Prostate gland (tissue), 2 donors: ENCODE measurements at regions of chr5 and their contacts with region 1.

Region 1: DNA sequence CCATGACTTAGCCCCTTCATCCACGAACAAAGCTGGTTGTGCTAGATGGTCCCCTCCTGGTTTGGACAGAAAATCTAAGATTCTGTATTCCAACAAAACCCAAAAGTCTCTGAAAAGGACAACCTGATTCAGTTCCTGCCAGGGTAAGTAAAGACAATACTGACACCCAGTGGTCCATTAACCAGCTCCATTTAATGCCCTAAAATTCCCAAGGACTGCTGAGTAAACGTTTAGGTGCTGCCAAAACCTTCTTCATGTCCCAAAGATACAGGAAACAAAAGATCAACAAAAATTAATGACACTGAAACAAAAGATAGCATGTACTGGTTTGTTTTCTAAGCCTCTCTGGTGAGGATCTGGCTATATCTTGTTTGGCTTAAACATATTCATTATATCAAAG is 25.3 kb upstream of the PPP1R2B start:
- DNase-seq: peak; percentile 30
- H3K4me3 ChIP-seq: no peak overlapping the region
- H3K27ac ChIP-seq: no peak overlapping the region
- H3K4me1 ChIP-seq: no peaks in the 10 kb centered on the region
- H3K27me3 ChIP-seq: no peaks in the 10 kb centered on the region
- CTCF ChIP-seq: peak in 3 of 4 experiments; percentile 35 to 57 (median 43)
- POLR2A ChIP-seq: no peak

Region 2: DNA sequence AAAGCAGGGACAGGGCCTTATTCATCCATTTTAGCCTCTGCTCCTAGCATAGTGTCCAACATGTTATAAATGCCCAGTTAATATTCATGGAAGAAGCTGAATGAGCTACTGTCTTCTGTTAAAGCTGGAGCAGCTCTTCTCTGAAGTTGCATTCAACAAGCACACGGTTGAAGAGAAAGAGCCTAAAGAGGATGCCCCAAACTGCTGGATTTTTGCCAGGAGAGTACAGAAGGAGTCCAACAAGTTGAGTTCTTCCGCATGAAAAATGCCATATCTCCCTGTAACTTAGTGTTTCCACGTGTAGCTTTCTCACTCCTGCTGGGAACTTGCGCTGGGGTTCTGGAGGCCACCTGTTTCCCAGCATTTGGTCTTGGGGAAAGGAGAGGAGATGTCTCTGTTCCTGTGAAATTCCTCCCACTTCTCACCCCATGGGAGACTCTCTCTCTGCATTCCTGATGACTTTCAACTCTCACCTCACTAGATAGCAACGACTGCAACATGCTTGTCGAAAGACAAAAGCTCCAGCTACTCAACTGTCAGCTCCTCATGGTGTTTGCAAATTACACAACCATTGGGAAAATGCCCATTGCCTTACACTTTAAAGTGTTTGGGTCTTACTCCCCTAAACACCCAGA is 1688.5 kb before region 1 on chr5:
- intact Hi-C with region 1: loop called (anchors 10 kb)
- DNase-seq: no peak
- H3K4me3 ChIP-seq: no peak overlapping the region
- H3K27ac ChIP-seq: no peak overlapping the region
- H3K4me1 ChIP-seq: no peaks in the 10 kb centered on the region
- H3K27me3 ChIP-seq: no peaks in the 10 kb centered on the region
- CTCF ChIP-seq: no peak
- POLR2A ChIP-seq: no peak

Region 3: DNA sequence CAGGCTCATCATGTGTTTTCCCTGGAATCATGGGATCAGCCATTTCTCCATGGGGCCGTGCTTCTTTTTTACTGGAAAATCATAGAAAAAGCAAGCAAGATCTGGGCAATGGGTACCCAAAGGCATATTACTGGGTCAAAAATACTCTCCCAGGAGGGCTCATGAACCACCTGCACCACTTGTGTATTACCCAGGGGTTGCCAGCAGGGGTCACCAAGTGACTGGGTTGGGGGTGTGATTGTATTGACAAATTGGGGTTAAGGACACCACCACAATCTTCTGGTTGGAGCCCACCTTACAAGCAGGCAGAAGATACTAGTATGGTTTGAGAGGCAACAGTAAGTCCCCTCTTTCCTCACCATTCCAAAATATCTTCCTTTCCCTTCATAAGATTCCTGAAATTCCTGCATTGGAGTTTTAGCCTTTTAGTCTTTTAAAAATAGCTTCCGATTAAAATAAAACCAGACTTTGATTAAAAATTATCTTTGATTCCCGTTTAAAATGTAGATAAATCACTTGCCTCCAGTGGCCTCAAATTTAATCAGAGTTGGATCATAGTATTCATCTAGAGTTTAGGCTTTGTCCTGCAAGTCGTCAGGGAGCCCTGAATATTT is 1207.9 kb before region 1 on chr5:
- intact Hi-C with region 1: loop called (anchors 10 kb)
- DNase-seq: no peak
- H3K4me3 ChIP-seq: no peak overlapping the region
- H3K27ac ChIP-seq: no peak overlapping the region
- H3K4me1 ChIP-seq: no peaks in the 10 kb centered on the region
- H3K27me3 ChIP-seq: no peaks in the 10 kb centered on the region
- CTCF ChIP-seq: peak; percentile 13 to 66 (median 48)
- POLR2A ChIP-seq: no peak

Region 4: DNA sequence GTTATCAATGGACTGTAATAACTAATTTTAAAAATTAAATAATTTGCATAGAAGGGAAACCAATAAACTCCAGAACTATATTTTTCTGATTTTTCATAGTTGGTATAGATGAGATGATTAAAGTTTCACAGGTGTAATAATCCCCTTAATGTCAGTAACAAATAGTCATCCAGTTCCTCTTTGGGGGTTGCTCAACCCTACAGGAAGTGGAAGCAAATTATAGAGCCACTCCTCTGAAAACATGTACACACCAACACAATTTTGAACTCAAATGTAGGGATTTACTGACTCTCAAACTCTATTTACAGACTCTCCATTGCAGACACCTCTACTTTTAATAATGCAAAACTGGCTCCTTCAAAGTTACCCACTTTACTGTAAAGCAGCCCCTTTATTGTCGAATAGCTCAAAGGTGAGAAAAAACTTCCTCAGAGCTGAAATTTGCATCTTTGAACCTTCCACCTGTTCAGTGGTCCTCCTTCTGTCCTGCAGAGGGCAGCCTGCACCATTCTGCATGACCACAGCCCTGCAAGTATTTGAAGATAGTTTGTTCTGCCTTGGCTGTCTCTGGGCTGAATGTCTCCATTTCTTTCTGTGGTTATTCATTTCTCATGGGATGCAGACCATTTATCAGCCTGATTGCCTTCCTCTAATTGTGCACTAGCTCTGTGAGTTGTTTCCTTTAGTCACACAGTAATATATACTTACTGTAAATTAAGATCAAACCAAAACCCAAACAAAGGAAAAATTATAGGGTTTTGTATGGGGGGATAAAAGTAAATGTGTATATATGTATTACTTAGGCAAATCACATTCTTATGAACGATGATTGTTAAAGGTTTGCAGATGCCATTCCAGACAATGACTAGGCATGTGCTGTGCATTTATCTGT is 881.0 kb before region 1 on chr5:
- intact Hi-C with region 1: loop called (anchors 2 kb)
- DNase-seq: peak; percentile 17
- H3K4me3 ChIP-seq: no peak overlapping the region
- H3K27ac ChIP-seq: no peak overlapping the region
- H3K4me1 ChIP-seq: no peaks in the 10 kb centered on the region
- H3K27me3 ChIP-seq: no peaks in the 10 kb centered on the region
- CTCF ChIP-seq: peak; percentile 47 to 64 (median 54)
- POLR2A ChIP-seq: no peak